ENCODE measurements at regions of chr7 and their contacts with region 1.

Region 1: GRCh38 chr7:65411249-65411648 is 37.6 kb downstream of the ZNF92 start:
- DNase-seq: no peak
- ATAC-seq: no peak
- H3K4me3 Mint-ChIP-seq: no peak overlapping the region
- H3K27ac Mint-ChIP-seq: no peak overlapping the region
- H3K4me1 Mint-ChIP-seq: no peaks in the 10 kb centered on the region
- H3K27me3 Mint-ChIP-seq: no peaks in the 10 kb centered on the region
- CTCF ChIP-seq: no peak

Region 2: GRCh38 chr7:65390588-65390987 is 20.7 kb before region 1 on chr7:
- CTCF ChIA-PET with region 1: no interaction called
- POLR2A ChIA-PET with region 1: no interaction called
- intact Hi-C with region 1: loop called (anchors 2 kb)
- DNase-seq: no peak
- ATAC-seq: no peak
- H3K4me3 Mint-ChIP-seq: no peak overlapping the region
- H3K27ac Mint-ChIP-seq: peak overlapping the region; percentile 67
- H3K4me1 Mint-ChIP-seq: peaks cover 69% of the 10 kb centered on the region
- H3K27me3 Mint-ChIP-seq: no peaks in the 10 kb centered on the region
- CTCF ChIP-seq: no peak